Left cardiac atrium (tissue), 4 donors: ENCODE measurements at regions of chr1 and their contacts with region 1.

Region 1: DNA sequence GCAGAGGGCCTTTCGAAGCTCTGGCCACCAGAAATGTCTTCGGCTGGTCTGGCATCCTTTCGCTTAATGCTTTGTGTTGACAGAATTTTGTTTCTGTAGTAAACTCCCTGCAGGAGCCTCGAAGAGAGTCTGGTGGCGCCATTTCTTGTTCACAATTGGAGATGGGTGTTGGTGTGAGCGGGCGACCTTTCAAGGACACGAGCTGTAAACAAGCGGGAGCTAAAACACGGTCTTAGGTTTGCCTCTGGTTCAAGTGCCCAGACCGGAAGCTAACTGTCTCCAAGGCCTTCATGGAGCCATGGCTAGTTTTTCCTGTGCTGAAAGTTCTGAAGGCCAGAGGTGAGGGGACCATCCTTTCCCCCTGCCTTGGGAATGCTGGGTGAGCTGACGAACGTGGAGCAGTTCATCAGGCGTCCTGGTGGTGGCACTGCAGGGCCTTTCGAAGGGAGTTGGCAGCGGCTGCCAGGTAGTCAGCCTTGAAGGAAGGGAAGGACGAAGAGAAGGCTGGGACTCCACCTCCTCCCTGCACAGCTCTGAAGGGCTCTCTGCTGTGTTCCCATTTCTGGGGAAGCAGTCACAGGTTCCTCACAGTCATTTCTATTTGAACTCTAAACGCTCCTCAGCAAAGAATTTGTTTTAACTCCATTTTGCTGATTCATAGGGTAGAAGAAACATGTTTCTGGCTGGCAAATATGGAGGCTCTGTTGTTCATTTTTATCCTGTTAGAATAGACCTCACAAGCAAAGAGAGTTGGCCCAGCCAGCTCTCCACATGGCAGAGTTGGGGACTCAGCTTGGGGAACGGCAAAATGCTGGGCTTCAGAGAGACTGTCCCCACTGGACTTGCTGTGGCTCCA is 35.2 kb downstream of the URB2 start:
- DNase-seq: peak; percentile 83
- ATAC-seq: peak; percentile 90 to 93

Region 2: DNA sequence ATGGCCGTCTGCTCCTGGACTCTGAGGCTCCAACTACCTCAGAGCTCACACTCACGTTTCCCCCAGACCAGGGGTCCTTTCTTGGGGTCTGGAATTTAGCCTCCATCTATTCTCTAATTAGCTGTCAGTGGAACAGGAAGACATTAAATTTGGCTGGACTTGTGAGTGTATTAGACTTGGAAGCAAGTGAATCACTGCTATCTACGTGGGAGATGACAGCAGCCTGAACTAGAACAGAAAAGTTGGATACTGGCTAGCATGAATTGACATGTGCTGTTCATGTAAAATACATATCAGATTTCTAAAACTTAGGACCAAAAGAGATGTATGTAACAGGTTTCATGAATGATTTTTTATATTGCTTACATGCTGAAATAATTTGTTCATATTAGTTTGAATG is 63.4 kb before region 1 on chr1:
- intact Hi-C with region 1: no loop called
- DNase-seq: no peak
- ATAC-seq: peak; percentile 10 to 63

Region 3: DNA sequence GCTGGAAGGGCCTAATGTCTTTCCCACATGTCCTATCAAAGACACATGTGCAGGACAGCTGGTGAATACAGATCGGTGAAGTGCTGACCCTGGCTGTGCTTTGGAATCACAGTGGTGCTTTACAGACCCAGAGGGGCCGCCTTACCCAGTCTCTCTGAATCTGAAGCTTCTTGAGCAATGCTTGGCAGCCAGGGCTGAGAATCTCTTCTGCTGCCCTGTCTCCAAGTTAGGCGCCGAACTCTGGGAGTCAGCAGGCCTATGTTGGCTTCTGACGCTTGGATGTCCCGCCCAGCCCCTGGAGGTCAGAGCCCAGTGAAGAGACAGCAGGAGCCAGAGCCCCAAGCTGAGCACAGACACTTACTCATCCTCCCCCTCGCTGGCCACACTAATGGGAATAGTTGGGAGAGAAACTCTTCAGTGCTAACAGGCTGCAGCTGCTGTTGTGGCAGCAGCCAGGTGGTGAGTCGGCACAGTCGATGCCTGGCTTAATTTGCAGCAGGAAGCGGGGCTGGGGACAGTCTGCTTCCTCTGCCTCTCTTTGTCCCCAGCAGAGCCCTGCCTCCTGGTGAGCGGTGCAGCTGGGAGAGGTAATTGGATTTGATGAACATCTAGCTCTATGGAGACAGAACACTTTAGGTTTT is 32.9 kb after region 1 on chr1:
- intact Hi-C with region 1: no loop called
- DNase-seq: peak; percentile 79
- ATAC-seq: peak; percentile 80 to 94

Region 4: GRCh38 chr1:230073371-230074035 is 412.3 kb after region 1 on chr1:
- intact Hi-C with region 1: loop called in 1 of 2 experiments (anchors 10 kb)
- DNase-seq: peak; percentile 41
- ATAC-seq: peak in 1 of 2 donors; percentile 44

Region 5: DNA sequence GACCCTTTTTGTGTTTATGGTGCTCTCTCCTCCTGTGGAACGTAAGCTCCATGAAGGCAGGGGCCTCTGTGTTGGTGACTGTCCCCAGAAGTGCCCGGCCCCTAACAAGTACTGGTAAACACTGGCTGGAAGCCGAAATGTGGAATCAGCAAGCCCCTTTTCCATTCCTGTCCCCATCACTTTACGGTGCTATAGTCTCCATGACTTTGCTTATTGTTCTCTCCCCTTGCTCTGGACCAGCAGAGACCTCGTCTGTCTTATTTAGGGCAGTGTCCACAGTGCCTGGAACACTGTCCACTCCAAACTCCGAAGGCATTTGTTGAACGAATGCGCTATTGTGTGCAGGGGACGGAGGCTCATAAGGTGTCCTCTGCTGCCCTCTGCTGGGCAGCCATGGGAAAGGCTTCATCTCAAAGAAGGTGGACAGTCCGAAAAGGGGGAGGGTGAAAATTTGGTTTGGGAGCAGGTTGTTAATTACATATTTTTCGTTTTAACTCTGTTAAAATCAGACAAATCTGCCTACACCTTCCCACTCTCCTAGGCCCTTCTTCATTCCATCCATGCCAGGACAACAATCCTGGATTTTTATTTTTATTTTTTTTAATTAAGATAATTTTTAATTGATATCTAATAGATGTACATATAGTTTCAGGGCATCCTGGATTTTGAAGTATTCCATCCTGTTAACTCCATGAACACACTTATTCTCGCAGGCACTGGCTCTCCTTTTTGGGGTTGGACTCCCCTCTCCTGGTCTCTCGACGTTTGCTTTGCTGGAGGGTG is 649.3 kb after region 1 on chr1:
- intact Hi-C with region 1: loop called (anchors 2 to 10 kb)
- DNase-seq: peak; percentile 79
- ATAC-seq: peak; percentile 84 to 88